ENCODE measurements at regions of chr5 and their contacts with region 1.

Region 1: GRCh38 chr5:91499943-91500531 is 116.9 kb upstream of the ARRDC3 start:
- DNase-seq: peak; percentile 60
- H3K4me3 Mint-ChIP-seq: no peak overlapping the region
- H3K27ac Mint-ChIP-seq: no peak overlapping the region
- H3K4me1 Mint-ChIP-seq: no peaks in the 10 kb centered on the region
- H3K27me3 Mint-ChIP-seq: peaks cover 20% of the 10 kb centered on the region
- CTCF ChIP-seq: peak; percentile 47

Region 2: DNA sequence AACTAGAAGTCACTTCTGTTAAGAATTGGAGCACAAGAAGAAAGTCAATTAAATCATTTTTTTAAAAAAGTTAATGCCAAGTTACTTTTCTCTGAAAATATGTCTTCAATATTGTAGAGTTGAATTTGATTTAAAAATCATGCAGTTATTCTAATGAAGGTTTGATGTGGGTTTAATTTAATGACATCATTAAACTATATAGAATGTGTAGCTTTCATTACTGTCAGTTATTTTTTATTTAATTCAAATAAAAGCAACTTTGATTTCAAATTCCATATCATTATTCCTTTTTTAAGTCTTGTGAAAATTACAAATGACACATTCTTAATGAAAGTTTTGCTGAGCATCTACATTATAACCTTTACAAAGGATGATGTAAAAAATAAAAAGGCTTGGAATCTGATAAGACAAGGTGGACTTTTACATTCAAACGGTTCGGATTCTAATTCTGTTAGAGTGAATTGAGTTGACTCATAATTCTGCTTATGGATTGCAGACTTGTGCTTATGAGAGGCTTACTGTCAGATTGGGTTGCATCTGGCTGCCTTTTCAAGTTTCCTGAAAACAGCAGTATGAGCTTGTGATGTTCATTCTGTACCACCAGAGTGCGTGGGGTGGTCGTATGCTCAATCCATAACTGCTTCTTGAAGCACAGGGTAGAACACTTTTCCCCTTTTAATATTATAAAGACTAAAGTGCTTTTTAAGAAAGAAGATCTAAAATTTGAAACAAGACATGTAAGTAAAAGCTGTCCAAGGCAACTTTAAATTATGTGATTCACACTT is 136.1 kb after region 1 on chr5:
- CTCF ChIA-PET with region 1: no interaction called
- POLR2A ChIA-PET with region 1: no interaction called
- intact Hi-C with region 1: loop called (anchors 5 kb)
- DNase-seq: no peak
- H3K4me3 Mint-ChIP-seq: no peak overlapping the region
- H3K27ac Mint-ChIP-seq: no peak overlapping the region
- H3K4me1 Mint-ChIP-seq: no peaks in the 10 kb centered on the region
- H3K27me3 Mint-ChIP-seq: peaks cover 79% of the 10 kb centered on the region
- CTCF ChIP-seq: no peak

Measured in MCF 10A (cell line).